B cell (primary cell): ENCODE measurements at regions of chr17 and their contacts with region 1.

Region 1: GRCh38 chr17:14359163-14360020 is 58.5 kb downstream of the HS3ST3B1 start:
- DNase-seq: peak; percentile 90
- ATAC-seq: peak; percentile 99
- H3K4me3 ChIP-seq: no peak overlapping the region
- H3K4me3 Mint-ChIP-seq: peak overlapping the region; percentile 71
- H3K27ac ChIP-seq: no peak overlapping the region
- H3K27ac Mint-ChIP-seq: peak overlapping the region; percentile 66
- H3K4me1 ChIP-seq: peaks cover 28% of the 10 kb centered on the region in 2 donors
- H3K4me1 Mint-ChIP-seq: peaks cover 31% of the 10 kb centered on the region
- H3K27me3 ChIP-seq: peaks cover 0 to 30% (median 22%) of the 10 kb centered on the region in 4 experiments
- H3K27me3 Mint-ChIP-seq: peaks cover 10% of the 10 kb centered on the region
- CTCF ChIP-seq: peak; percentile 47

Region 2: DNA sequence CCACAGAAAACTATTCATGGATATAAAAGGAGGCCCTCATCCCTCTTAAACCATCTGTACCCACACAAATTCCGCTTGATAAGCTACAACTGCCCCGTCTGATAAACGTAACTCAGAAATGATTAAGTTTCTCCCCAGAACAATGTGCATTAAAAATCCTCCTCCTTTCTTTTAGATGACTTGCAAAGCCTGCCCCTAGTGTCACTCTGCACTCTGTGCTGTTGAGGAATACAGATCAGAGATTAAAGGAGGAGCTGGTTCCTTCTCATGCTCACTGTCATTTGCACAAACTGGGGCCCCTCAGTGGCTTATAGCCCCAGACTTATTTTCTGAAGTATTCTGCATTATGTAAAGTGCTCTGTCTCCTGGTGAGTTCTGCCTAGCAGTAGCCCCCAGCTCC is 156.0 kb before region 1 on chr17:
- CTCF ChIA-PET with region 1: no interaction called
- POLR2A ChIA-PET with region 1: no interaction called
- intact Hi-C with region 1: no loop called
- DNase-seq: no peak
- ATAC-seq: no peak
- H3K4me3 ChIP-seq: no peak overlapping the region
- H3K4me3 Mint-ChIP-seq: no peak overlapping the region
- H3K27ac ChIP-seq: no peak overlapping the region
- H3K27ac Mint-ChIP-seq: no peak overlapping the region
- H3K4me1 ChIP-seq: no peaks in the 10 kb centered on the region
- H3K4me1 Mint-ChIP-seq: no peaks in the 10 kb centered on the region
- H3K27me3 ChIP-seq: peaks cover 0 to 8% (median 1%) of the 10 kb centered on the region in 4 experiments
- H3K27me3 Mint-ChIP-seq: peaks cover 4% of the 10 kb centered on the region
- CTCF ChIP-seq: no peak

Region 3: DNA sequence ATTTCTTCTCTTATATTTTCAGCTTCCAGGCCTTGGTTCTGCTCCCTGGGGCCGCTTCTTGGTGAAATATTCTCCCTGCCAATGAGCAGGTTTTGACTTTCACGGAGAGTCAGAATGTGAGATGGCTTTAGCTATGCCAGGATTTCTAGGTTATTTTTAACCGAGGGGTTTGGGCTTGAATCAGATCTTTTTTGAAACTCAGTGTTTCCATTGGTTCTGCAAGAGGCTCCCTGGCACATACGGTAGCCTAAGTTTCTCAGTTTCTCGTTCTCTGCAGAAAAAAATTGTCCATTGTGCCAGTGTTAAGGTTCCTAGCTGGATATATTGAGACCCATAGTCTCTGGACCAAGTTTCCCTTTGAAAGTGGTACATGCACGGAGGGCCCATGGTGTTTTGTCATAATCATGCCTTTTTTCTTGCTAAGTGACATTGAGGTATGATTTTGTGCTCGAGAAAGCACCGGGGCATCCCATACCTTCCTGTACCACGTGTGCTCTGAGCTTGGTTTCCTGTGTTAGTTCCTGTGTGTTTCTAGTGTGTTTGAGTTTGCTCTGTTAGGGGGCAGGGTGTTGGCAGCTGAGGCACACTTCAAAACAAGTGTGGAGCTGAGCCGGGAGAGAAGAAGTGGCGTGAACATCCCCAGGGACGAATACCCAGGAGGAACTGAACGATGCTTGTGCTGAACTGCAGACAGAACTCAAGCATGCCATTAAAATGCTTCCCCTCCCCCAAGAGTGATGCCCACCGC is 68.7 kb after region 1 on chr17:
- CTCF ChIA-PET with region 1: interaction called, 14 read pairs
- POLR2A ChIA-PET with region 1: interaction called, 5 read pairs
- intact Hi-C with region 1: loop called (anchors 1 kb)
- DNase-seq: peak; percentile 77
- ATAC-seq: peak; percentile 87
- H3K4me3 ChIP-seq: peak overlapping the region; percentile 13 to 71 (median 38)
- H3K4me3 Mint-ChIP-seq: peak overlapping the region; percentile 83
- H3K27ac ChIP-seq: peak overlapping the region; percentile 58 to 79
- H3K27ac Mint-ChIP-seq: peak overlapping the region; percentile 93
- H3K4me1 ChIP-seq: peaks cover 44 to 45% of the 10 kb centered on the region in 2 donors
- H3K4me1 Mint-ChIP-seq: peaks cover 45% of the 10 kb centered on the region
- H3K27me3 ChIP-seq: no peaks in the 10 kb centered on the region
- H3K27me3 Mint-ChIP-seq: peaks cover 5% of the 10 kb centered on the region
- CTCF ChIP-seq: no peak

Region 4: GRCh38 chr17:14605267-14605599 is 245.8 kb after region 1 on chr17:
- CTCF ChIA-PET with region 1: no interaction called
- POLR2A ChIA-PET with region 1: no interaction called
- intact Hi-C with region 1: loop called (anchors 5 kb)
- DNase-seq: peak; percentile 61
- ATAC-seq: peak; percentile 68
- H3K4me3 ChIP-seq: peak overlapping the region in 4 of 5 experiments; percentile 7 to 43 (median 24)
- H3K4me3 Mint-ChIP-seq: peak overlapping the region; percentile 76
- H3K27ac ChIP-seq: peak overlapping the region; percentile 9 to 28
- H3K27ac Mint-ChIP-seq: peak overlapping the region; percentile 44
- H3K4me1 ChIP-seq: peaks cover 13 to 15% of the 10 kb centered on the region in 2 donors
- H3K4me1 Mint-ChIP-seq: peaks cover 18% of the 10 kb centered on the region
- H3K27me3 ChIP-seq: no peaks in the 10 kb centered on the region
- H3K27me3 Mint-ChIP-seq: no peaks in the 10 kb centered on the region
- CTCF ChIP-seq: no peak